A549 (cell line): ENCODE measurements at regions of chr9 and their contacts with region 1.

Region 1: GRCh38 chr9:98724810-98725530 is 16.2 kb upstream of the GABBR2 start:
- DNase-seq: no peak
- ATAC-seq: no peak
- H3K4me3 ChIP-seq: no peak overlapping the region
- H3K27ac ChIP-seq: no peak overlapping the region
- H3K4me1 ChIP-seq: no peaks in the 10 kb centered on the region
- CTCF ChIP-seq: no peak
- EP300 ChIP-seq: no peak
- POLR2A ChIP-seq: no peak
- RAD21 ChIP-seq: no peak

Region 2: DNA sequence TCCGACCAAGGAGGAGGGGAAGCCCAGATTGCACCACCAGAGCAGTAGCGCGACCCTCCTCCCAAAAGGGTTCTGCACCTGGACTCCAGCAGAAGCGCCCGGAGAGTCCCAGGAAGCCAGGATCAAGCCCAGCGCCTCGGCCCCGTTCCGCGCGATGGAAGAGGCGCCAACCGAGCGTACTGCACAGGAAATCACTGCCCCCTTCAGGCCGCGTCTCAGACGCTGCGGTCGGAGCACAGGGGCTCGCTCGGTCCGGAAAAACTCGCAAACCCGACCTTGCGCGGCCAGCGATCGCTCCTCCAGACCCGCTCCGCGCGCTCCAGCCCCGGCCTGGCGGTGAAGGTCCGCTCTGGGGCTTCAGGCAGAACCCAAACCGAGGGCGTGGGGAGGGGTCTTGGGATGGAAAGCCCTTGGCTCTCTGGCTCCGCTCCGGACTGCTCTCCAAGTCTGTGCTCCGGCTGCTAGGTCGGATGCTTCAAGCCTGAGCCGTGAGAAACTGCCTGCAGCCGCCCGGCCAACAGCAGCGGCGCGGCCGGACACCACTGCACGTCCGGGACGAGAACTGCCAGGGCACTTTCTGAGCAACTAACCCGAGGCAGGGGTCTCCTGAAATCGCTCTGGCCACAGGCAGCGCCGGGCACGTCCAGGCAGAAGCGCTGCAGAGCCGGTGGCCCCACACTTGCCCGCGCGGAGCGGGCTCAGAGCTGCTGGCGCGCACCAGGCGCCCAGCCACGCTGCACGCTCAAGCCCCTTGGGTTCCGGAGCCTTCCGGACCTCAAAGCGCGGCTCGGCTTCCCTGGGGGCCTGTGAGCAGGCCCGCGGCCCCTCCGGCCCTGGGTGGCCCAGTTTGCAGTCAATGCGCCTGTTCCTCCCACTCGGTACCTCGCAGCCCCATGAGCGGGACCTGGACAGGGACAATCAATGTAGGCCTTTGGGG is 17.5 kb before region 1 on chr9:
- CTCF ChIA-PET with region 1: interaction called, 14 read pairs
- POLR2A ChIA-PET with region 1: no interaction called
- DNase-seq: peak; percentile 69 to 78
- ATAC-seq: peak; percentile 80 to 95
- H3K4me3 ChIP-seq: peak overlapping the region; percentile 52
- H3K27ac ChIP-seq: no peak overlapping the region
- H3K4me1 ChIP-seq: peaks cover 15% of the 10 kb centered on the region
- CTCF ChIP-seq: peak; percentile 54
- EP300 ChIP-seq: no peak
- POLR2A ChIP-seq: no peak
- RAD21 ChIP-seq: peak; percentile 69 to 73